ENCODE measurements at regions of chr4 and their contacts with region 1.

Region 1: GRCh38 chr4:158624889-158625478 is 46.7 kb downstream of the C4orf46 start:
- DNase-seq: peak in 1 of 2 donors; percentile 49
- ATAC-seq: peak; percentile 36 to 59 (median 57)
- H3K4me3 ChIP-seq: no peak overlapping the region
- H3K4me3 Mint-ChIP-seq: no peak overlapping the region
- H3K27ac ChIP-seq: no peak overlapping the region
- H3K27ac Mint-ChIP-seq: no peak overlapping the region
- H3K4me1 ChIP-seq: no peaks in the 10 kb centered on the region
- H3K4me1 Mint-ChIP-seq: no peaks in the 10 kb centered on the region
- H3K27me3 ChIP-seq: no peaks in the 10 kb centered on the region
- H3K27me3 Mint-ChIP-seq: peaks cover 5 to 13% of the 10 kb centered on the region in 2 donors
- CTCF ChIP-seq: peak; percentile 55

Region 2: DNA sequence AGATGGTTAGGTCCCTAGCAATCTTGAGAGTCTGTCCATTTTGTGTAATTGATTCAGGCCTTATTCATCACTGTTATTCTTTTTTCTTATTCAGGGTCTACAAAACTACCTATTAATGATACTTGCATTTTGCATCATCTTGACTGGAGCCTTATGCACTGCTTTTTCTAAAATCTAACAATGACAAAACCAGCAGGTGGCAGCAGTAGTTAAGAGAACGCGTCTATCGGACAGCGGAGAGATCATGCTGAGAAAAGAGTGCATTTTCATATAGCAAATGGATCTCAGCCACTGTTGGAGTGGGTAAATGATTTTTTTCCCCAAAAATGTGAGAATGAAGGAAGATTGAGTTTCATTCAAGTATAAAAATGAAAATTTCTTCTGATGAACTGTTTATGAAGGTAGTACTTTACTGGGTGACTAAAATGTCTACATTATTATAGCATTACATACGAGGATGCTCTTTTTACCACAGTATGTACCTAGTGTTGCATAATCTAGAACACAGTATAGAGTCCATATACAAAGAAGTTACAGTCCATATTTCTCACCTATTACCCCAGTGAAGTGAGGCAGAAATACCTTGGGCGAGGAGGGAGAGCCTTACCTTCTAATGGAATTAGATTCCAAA is 371.5 kb before region 1 on chr4:
- intact Hi-C with region 1: loop called (anchors 5 kb)
- DNase-seq: peak in 1 of 2 donors; percentile 60
- ATAC-seq: peak in 2 of 3 donors; percentile 49 to 54
- H3K4me3 ChIP-seq: no peak overlapping the region
- H3K4me3 Mint-ChIP-seq: no peak overlapping the region
- H3K27ac ChIP-seq: no peak overlapping the region
- H3K27ac Mint-ChIP-seq: no peak overlapping the region
- H3K4me1 ChIP-seq: no peaks in the 10 kb centered on the region
- H3K4me1 Mint-ChIP-seq: peaks cover 0 to 4% of the 10 kb centered on the region in 2 donors
- H3K27me3 ChIP-seq: no peaks in the 10 kb centered on the region
- H3K27me3 Mint-ChIP-seq: peaks cover 0 to 7% of the 10 kb centered on the region in 2 donors
- CTCF ChIP-seq: peak; percentile 23

Region 3: DNA sequence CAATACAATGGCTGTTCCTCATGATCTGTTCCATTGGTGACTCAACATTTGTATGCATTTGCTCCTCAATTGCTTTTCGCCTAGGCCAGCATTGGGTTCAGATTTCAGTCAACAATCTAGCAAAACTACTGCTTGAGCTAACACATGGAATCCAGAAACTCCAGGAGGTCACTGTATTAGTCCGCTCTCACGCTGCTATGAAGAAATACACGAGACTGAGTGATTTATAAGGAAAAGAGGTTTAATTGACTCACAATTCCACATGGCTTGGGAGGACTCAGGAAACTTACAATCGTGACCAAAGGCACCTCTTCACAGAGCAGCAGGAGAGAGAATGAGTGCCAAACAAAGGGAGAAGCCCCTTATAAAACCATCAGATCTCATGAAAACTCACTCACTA is 36.2 kb before region 1 on chr4:
- intact Hi-C with region 1: no loop called
- DNase-seq: no peak
- ATAC-seq: no peak
- H3K4me3 ChIP-seq: no peak overlapping the region
- H3K4me3 Mint-ChIP-seq: no peak overlapping the region
- H3K27ac ChIP-seq: no peak overlapping the region
- H3K27ac Mint-ChIP-seq: no peak overlapping the region
- H3K4me1 ChIP-seq: no peaks in the 10 kb centered on the region
- H3K4me1 Mint-ChIP-seq: no peaks in the 10 kb centered on the region
- H3K27me3 ChIP-seq: no peaks in the 10 kb centered on the region
- H3K27me3 Mint-ChIP-seq: peaks cover 3 to 15% of the 10 kb centered on the region in 2 donors
- CTCF ChIP-seq: no peak

Region 4: GRCh38 chr4:158599150-158599549 is 25.8 kb before region 1 on chr4:
- intact Hi-C with region 1: no loop called
- DNase-seq: no peak
- ATAC-seq: peak in 2 of 3 donors; percentile 34 to 48
- H3K4me3 ChIP-seq: no peak overlapping the region
- H3K4me3 Mint-ChIP-seq: no peak overlapping the region
- H3K27ac ChIP-seq: no peak overlapping the region
- H3K27ac Mint-ChIP-seq: no peak overlapping the region
- H3K4me1 ChIP-seq: no peaks in the 10 kb centered on the region
- H3K4me1 Mint-ChIP-seq: no peaks in the 10 kb centered on the region
- H3K27me3 ChIP-seq: peaks cover 5% of the 10 kb centered on the region
- H3K27me3 Mint-ChIP-seq: peaks cover 0 to 5% of the 10 kb centered on the region in 2 donors
- CTCF ChIP-seq: no peak